ENCODE measurements at regions of chr3 and their contacts with region 1.

Region 1: GRCh38 chr3:197002701-197003454 is 26.7 kb downstream of the MELTF start:
- DNase-seq: peak; percentile 64 to 78 (median 70)
- H3K4me3 ChIP-seq: peak overlapping the region; percentile 39 to 78 (median 56)
- H3K4me3 Mint-ChIP-seq: peak overlapping the region in 1 of 2 donors; percentile 75
- H3K27ac ChIP-seq: peak overlapping the region in 1 of 2 donors; percentile 26
- H3K27ac Mint-ChIP-seq: no peak overlapping the region
- H3K4me1 ChIP-seq: peaks cover 12 to 21% of the 10 kb centered on the region in 2 donors
- H3K4me1 Mint-ChIP-seq: peaks cover 12% of the 10 kb centered on the region
- H3K27me3 ChIP-seq: peaks cover 0 to 12% of the 10 kb centered on the region in 2 donors
- H3K27me3 Mint-ChIP-seq: peaks cover 10 to 15% (median 13%) of the 10 kb centered on the region in 3 donors
- CTCF ChIP-seq: peak; percentile 81

Region 2: DNA sequence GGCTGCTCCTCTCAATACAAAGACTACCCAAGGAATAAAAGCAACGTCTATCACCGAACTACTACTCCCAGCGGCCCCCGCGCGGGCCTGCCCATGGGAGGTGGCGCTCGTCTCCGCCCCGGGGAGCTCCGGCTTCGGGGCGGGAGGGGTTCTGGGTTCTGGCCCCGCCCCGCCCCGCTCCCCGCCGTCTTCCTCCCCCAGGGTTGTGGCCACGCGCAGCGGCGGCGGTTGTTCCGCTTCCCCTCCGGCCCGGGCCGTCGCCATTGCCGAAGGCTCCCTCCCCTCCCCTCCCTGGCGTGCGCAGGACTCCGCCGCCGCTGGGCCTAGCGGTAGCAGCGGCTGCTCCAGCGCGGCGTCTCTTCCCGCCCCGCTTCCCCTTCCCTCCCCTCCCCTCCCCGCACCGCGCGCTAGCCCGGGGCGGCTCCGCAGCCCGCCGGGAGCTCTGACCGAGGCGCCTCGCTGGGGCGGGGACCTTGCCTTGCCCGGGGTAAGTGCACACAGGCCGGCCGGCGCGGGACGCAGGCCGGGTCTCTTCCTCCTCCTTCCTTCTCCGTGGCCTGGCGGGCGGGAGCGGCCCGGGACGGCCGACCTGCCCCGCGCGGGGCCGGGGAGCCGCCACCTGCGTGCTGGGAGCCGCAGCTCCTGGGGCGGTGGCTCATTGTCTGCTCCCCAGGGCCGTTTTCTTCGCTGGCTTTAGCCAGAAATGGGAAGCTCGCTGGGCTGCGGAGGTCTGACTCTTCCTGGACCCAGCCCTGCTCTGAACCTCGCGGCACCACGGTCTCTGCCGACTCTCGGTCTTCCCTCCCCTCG is 263.0 kb before region 1 on chr3 and contains the start of gene PAK2:
- intact Hi-C with region 1: no loop called
- DNase-seq: peak; percentile 87 to 90 (median 89)
- H3K4me3 ChIP-seq: peak within 1 kb of the TSS; percentile 75 to 98 (median 95)
- H3K4me3 Mint-ChIP-seq: peak within 1 kb of the TSS; percentile 98 to 100
- H3K27ac ChIP-seq: peak within 1 kb of the TSS; percentile 88 to 97
- H3K27ac Mint-ChIP-seq: peak within 1 kb of the TSS; percentile 96 to 99 (median 98)
- H3K4me1 ChIP-seq: peaks cover 19 to 31% of the 10 kb centered on the region in 2 donors
- H3K4me1 Mint-ChIP-seq: peaks cover 27% of the 10 kb centered on the region
- H3K27me3 ChIP-seq: no peaks in the 10 kb centered on the region
- H3K27me3 Mint-ChIP-seq: peaks cover 0 to 1% (median 0%) of the 10 kb centered on the region in 3 donors
- CTCF ChIP-seq: no peak
- polyA plus RNA-seq, gene PAK2: 32.4 to 44.2 (median 33.2) TPM

Region 3: DNA sequence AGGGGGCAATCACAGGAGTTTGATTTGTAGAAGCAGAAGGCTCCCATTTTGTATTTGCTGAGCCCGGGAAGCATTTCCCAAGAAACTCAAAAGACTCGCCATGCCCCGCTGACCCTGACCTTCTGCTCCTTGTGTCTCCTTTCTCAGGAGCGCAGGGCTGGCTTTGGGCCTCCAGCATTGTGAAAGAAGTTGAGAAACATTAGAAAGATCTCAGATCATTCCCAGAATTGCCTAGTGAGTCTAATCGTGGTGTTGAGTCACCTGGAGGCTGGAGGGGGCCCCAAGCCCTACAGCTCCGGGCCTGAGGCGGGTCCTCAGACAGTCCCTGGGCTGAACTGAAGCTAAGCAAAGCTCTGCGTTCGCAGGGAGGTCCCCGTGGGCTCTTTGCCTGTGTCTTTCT is 23.3 kb before region 1 on chr3:
- intact Hi-C with region 1: no loop called
- DNase-seq: no peak
- H3K4me3 ChIP-seq: no peak overlapping the region
- H3K4me3 Mint-ChIP-seq: no peak overlapping the region
- H3K27ac ChIP-seq: no peak overlapping the region
- H3K27ac Mint-ChIP-seq: no peak overlapping the region
- H3K4me1 ChIP-seq: no peaks in the 10 kb centered on the region
- H3K4me1 Mint-ChIP-seq: peaks cover 3% of the 10 kb centered on the region
- H3K27me3 ChIP-seq: no peaks in the 10 kb centered on the region
- H3K27me3 Mint-ChIP-seq: peaks cover under 1 to 5% (median 4%) of the 10 kb centered on the region in 3 donors
- CTCF ChIP-seq: no peak

Region 4: GRCh38 chr3:197028728-197029510 is 26.0 kb after region 1 on chr3:
- intact Hi-C with region 1: loop called in 1 of 2 experiments (anchors 1 kb)
- DNase-seq: peak; percentile 30 to 51 (median 34)
- H3K4me3 ChIP-seq: peak overlapping the region; percentile 40 to 78 (median 45)
- H3K4me3 Mint-ChIP-seq: peak overlapping the region; percentile 84 to 87
- H3K27ac ChIP-seq: no peak overlapping the region
- H3K27ac Mint-ChIP-seq: peak overlapping the region in 6 of 7 donors; percentile 11 to 89 (median 49)
- H3K4me1 ChIP-seq: peaks cover 34 to 46% of the 10 kb centered on the region in 2 donors
- H3K4me1 Mint-ChIP-seq: peaks cover 31% of the 10 kb centered on the region
- H3K27me3 ChIP-seq: peaks cover 0 to 12% of the 10 kb centered on the region in 2 donors
- H3K27me3 Mint-ChIP-seq: peaks cover 13 to 42% (median 30%) of the 10 kb centered on the region in 3 donors
- CTCF ChIP-seq: no peak

Region 5: DNA sequence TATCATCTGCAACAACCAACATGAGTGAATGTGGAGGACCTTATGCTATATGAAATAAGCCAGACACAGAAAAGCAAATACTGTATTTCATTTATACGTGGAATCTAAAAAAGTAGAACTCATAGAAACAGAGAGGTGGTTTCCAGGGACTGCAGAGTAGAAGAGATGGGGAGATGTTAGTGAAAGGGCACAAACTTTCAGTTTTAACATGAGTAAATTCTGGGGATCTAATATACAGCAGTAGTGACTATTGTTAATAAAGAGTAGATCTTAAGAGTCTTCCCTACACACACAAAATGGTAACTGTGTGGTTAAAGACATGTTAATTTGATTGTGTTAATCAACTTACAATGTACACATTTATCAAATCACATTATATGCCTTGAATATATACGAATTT is 47.6 kb after region 1 on chr3:
- intact Hi-C with region 1: loop called in 1 of 2 experiments (anchors 5 kb)
- DNase-seq: no peak
- H3K4me3 ChIP-seq: no peak overlapping the region
- H3K4me3 Mint-ChIP-seq: no peak overlapping the region
- H3K27ac ChIP-seq: no peak overlapping the region
- H3K27ac Mint-ChIP-seq: no peak overlapping the region
- H3K4me1 ChIP-seq: no peaks in the 10 kb centered on the region
- H3K4me1 Mint-ChIP-seq: no peaks in the 10 kb centered on the region
- H3K27me3 ChIP-seq: no peaks in the 10 kb centered on the region
- H3K27me3 Mint-ChIP-seq: no peaks in the 10 kb centered on the region
- CTCF ChIP-seq: no peak

Region 6: GRCh38 chr3:197186887-197187588 is 184.2 kb after region 1 on chr3:
- intact Hi-C with region 1: loop called (anchors 2 kb)
- DNase-seq: peak; percentile 55 to 72 (median 67)
- H3K4me3 ChIP-seq: no peak overlapping the region
- H3K4me3 Mint-ChIP-seq: no peak overlapping the region
- H3K27ac ChIP-seq: no peak overlapping the region
- H3K27ac Mint-ChIP-seq: no peak overlapping the region
- H3K4me1 ChIP-seq: peaks cover 7 to 19% of the 10 kb centered on the region in 2 donors
- H3K4me1 Mint-ChIP-seq: peaks cover 11% of the 10 kb centered on the region
- H3K27me3 ChIP-seq: no peaks in the 10 kb centered on the region
- H3K27me3 Mint-ChIP-seq: no peaks in the 10 kb centered on the region
- CTCF ChIP-seq: peak; percentile 86

Measured in CD14-positive monocyte (primary cell).